ENCODE measurements at regions of chr13 and their contacts with region 1.

Region 1: DNA sequence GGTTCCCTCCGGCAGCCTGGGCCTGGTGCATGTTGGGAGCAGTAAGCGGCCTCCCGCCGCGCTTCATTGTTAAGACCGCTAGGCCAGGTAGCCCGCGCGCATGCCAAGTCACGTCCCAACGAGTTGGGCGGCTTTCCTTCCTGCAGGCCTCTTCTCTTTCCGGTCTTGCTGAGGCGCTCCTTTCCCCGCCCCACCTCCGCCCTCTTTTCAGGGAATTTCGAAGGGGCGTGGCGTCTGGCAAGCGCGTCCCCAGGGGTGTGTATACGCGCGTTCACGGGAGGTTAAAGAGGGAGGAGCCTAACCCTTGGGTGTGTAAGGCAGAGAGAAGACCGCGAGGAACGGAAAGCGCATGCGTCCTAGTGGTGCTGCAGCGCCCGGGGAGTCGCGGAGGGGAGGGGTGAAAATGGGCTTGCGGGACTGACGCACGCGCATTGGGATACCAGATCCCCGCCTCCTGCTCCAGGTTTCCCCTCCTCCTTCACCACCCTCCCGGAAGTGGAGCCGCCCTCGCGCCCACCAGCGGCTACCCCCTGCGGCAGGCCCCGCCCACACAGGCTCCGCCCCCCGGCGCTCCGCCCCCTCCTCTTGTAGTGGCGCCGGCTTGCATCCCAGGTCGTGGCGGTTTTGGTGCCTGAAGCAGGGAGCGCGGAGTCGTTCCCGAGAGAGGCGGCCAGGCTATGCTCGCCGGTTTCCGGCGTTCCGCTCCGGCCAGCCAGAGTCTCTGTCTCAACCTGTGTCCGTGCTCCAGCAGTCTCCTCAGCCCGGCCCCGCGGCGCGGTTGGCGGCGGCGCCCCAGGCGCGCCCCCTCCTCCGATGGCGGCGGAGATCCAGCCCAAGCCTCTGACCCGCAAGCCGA is at the start of gene WDFY2:
- H3K4me3 ChIP-seq: peak within 1 kb of the TSS; percentile 65
- H3K27ac ChIP-seq: peak within 1 kb of the TSS; percentile 93
- H3K4me1 ChIP-seq: peaks cover 15% of the 10 kb centered on the region
- CTCF ChIP-seq: no peak

Region 2: DNA sequence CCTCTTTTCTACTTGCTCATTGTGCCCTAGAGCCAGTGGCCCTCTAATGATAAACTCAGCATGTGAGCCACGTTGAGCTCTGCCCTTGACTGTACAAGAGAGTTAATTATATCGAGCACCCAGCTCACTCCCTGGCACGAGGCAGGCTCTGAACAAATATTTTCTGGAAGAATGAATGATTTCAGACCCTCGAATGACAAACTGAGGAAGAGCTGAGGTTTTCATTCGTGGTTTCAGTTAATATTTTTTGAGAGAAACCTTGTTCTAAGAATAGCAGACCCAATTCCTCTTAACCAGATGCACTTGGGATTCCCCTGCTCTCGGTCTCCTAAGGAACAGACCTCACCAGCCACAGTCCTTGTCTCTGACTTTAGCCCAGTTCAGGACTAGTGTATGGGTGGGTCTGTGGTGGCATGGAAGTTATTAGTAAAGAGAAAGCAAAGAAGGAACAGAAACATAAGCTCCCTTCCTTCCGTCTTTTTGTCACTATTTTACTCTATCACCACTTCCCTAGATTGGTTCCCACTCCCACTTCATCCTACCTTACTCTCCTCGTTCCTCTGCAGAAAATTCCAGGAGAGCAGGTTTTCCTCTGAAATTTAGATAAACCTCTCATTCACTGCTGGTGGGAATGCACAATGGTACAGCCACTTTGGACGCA is 22.0 kb before region 1 on chr13:
- CTCF ChIA-PET with region 1: no interaction called
- POLR2A ChIA-PET with region 1: interaction called, 10 read pairs
- H3K4me3 ChIP-seq: no peak overlapping the region
- H3K27ac ChIP-seq: no peak overlapping the region
- H3K4me1 ChIP-seq: no peaks in the 10 kb centered on the region
- CTCF ChIP-seq: no peak